Caco-2 (cell line): ENCODE measurements at regions of chr14 and their contacts with region 1.

Region 1: DNA sequence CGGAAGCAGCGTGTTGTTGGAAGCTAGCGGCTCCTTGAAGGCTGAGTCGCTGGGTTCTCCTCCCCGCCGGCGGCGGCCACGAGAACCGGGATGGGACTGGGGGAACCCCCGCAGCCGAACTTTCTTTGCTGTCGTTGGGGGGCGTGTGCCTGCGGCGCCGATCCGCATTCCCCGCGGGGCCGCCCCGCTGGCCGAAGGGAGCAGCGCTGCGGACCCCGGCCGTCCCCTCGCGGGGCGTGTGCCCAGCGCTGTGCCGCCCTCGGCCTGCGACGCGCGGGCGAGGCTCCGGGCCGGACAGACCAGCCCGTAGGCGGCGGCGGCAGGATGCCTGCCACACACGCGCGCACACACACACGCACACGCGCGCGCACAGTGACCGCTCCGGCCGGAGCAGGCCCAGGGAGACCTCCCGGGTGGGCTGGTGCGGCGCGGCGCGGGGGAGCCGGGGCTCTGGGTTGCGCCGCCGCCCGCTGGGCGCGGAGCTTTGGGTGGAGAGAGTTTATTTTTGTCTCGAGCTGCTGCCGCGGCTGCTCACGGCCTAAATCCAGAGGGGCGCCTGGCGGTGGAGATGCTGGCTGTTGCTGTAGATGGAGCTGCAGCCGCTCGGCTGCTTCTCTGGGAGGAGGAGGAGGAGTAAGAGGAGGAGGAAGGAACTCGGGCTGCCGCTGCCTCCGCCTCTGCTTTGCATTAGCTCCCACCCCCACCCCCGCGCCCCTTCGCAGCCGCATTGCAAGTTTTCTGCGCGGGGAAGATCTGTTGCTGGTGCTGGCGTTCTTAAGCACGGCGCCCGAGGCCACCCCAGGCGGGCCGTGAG is at the start of gene SAMD4A:
- DNase-seq: peak; percentile 72 to 83
- H3K4me3 ChIP-seq: peak within 1 kb of the TSS; percentile 73
- H3K4me3 Mint-ChIP-seq: peak within 1 kb of the TSS; percentile 95
- H3K27ac Mint-ChIP-seq: peak within 1 kb of the TSS; percentile 98
- H3K4me1 ChIP-seq: peaks cover 24% of the 10 kb centered on the region
- H3K4me1 Mint-ChIP-seq: peaks cover 8% of the 10 kb centered on the region
- H3K27me3 ChIP-seq: no peaks in the 10 kb centered on the region
- H3K27me3 Mint-ChIP-seq: no peaks in the 10 kb centered on the region
- CTCF ChIP-seq: peak in 1 of 2 experiments; percentile 14
- total RNA-seq, gene SAMD4A: 60.4 and 60.8 TPM in 2 replicates

Region 2: DNA sequence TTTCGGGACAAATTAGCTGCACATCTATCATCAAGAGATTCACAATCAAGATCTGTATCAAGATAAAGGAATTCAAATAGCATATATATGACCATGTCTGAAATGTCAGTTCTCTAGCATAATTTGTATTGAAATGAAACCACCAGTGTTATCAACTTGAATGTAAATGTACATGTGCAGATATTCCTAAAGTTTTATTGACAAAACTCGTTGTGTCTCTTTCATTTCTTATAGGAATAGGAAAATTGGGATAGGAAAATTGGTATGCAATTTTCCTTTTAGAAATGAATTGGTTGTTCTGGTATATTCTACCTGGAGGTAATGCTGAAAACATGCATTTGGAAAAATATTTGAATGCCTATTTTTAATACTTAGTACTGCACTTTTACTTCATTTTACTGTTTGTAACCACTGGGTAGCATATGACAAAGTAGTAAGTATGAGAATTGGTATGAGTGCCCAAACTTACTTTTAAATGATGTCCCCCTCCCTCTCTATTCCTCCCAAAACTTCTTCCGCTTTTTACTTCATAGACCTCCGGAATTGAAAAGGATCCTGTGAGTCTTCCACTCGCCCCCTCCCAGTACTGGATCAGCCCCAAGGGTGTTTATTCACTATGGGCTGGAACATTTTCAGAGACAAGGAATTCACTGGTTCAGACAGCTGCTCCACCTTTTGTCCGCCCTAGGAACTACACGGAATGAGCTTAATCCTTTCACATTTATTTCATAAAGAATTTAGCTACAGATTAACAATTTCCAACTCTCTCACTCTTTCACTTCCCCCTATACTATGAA is 146.4 kb before region 1 on chr14:
- CTCF ChIA-PET with region 1: no interaction called
- POLR2A ChIA-PET with region 1: no interaction called
- intact Hi-C with region 1: no loop called
- DNase-seq: peak; percentile 59 to 66
- H3K4me3 ChIP-seq: no peak overlapping the region
- H3K4me3 Mint-ChIP-seq: no peak overlapping the region
- H3K27ac Mint-ChIP-seq: no peak overlapping the region
- H3K4me1 ChIP-seq: no peaks in the 10 kb centered on the region
- H3K4me1 Mint-ChIP-seq: peaks cover 9% of the 10 kb centered on the region
- H3K27me3 ChIP-seq: no peaks in the 10 kb centered on the region
- H3K27me3 Mint-ChIP-seq: no peaks in the 10 kb centered on the region
- CTCF ChIP-seq: peak; percentile 48 to 67

Region 3: GRCh38 chr14:54532111-54533012 is 34.3 kb before region 1 on chr14:
- CTCF ChIA-PET with region 1: no interaction called
- POLR2A ChIA-PET with region 1: no interaction called
- intact Hi-C with region 1: no loop called
- DNase-seq: no peak
- H3K4me3 ChIP-seq: no peak overlapping the region
- H3K4me3 Mint-ChIP-seq: no peak overlapping the region
- H3K27ac Mint-ChIP-seq: no peak overlapping the region
- H3K4me1 ChIP-seq: peaks cover under 1% of the 10 kb centered on the region; the same call in 1 of the 2 replicates
- H3K4me1 Mint-ChIP-seq: no peaks in the 10 kb centered on the region
- H3K27me3 ChIP-seq: no peaks in the 10 kb centered on the region
- H3K27me3 Mint-ChIP-seq: no peaks in the 10 kb centered on the region
- CTCF ChIP-seq: no peak

Region 4: GRCh38 chr14:54642801-54643697 is 76.4 kb after region 1 on chr14:
- CTCF ChIA-PET with region 1: interaction called, 61 read pairs
- POLR2A ChIA-PET with region 1: interaction called, 17 read pairs
- intact Hi-C with region 1: loop called (anchors 1 kb)
- DNase-seq: peak; percentile 79
- H3K4me3 ChIP-seq: no peak overlapping the region
- H3K4me3 Mint-ChIP-seq: peak overlapping the region; percentile 75
- H3K27ac Mint-ChIP-seq: peak overlapping the region; percentile 87
- H3K4me1 ChIP-seq: peaks cover 79% of the 10 kb centered on the region
- H3K4me1 Mint-ChIP-seq: peaks cover 31% of the 10 kb centered on the region
- H3K27me3 ChIP-seq: no peaks in the 10 kb centered on the region
- H3K27me3 Mint-ChIP-seq: no peaks in the 10 kb centered on the region
- CTCF ChIP-seq: peak in 1 of 2 experiments; percentile 23

Region 5: DNA sequence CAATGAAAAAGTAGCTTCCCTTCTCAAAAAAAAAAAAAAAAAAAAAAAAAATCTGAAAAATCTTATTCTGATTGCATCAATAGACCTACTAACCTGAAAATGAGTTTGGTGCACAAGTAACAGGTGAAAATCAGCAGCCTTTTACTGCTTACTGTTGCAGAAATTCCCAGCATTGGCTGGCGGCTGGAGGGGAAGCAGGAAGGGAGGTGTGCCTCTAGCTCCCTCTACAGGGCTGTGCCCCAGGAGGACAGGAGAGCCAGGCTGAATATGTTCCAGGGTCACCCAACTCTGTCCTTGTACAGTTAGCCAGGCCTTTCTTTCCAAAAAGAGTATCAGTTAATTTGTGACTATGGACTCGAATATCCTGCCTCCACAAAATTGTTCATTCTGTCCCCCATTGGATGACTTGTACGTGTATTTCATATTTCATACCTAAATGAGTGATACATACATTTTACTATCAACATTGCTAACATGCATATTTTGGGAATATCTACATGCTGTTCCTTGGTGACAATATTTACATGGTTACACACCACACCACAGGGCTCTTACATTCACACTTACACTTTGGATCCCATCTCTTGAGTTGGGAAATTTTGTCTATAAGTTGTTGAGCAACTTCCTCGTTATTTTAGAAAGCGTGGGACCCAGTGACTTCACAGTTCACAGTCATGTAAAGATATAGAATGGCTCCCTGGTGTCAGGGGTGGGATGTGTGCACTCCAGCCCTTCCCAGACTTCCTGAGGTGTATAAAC is 125.1 kb after region 1 on chr14:
- CTCF ChIA-PET with region 1: interaction called, 8 read pairs
- POLR2A ChIA-PET with region 1: no interaction called
- intact Hi-C with region 1: loop called (anchors 1 kb)
- DNase-seq: peak; percentile 71 to 82
- H3K4me3 ChIP-seq: no peak overlapping the region
- H3K4me3 Mint-ChIP-seq: no peak overlapping the region
- H3K27ac Mint-ChIP-seq: peak overlapping the region; percentile 58
- H3K4me1 ChIP-seq: no peaks in the 10 kb centered on the region
- H3K4me1 Mint-ChIP-seq: peaks cover 33% of the 10 kb centered on the region
- H3K27me3 ChIP-seq: no peaks in the 10 kb centered on the region
- H3K27me3 Mint-ChIP-seq: no peaks in the 10 kb centered on the region
- CTCF ChIP-seq: peak; percentile 77 to 93

Region 6: DNA sequence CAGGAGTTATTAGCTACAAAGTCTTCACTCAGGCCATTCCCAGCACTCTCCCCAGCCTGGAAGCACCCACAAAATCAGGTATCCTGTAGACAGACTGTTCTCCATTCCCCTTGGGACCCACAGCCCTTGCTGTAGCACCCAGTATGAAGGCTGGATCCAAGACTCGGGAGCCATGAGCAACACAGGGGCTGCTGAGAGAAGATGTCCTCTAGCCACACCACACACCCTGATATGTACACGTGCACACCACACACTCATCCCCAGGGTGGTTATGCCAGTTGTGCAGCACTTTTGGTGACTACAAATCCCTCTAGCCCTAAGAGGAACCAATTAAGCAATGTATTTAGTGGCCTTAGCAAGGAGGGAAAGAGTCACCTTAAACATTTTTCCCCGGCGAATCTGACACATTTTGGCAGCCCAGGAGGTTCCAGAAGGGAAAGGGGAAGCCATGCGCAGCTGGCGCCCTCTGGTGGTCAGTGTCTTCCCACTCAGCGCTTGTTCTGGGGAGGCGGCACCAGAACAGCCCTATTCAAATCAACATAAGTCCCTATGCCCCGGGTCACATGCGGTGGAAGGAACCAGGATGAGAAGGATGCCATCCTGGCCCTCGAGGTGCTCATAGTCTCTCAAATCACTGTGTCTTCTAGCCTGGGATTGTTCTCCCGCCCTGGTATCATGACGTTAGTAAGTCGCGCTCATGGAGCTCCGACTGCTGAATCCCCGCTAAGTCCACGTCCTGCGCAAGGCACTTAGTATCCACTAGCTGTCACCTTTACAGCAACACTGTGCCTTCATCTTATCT is 239.1 kb after region 1 on chr14:
- CTCF ChIA-PET with region 1: interaction called, 8 read pairs
- POLR2A ChIA-PET with region 1: no interaction called
- intact Hi-C with region 1: loop called (anchors 1 kb)
- DNase-seq: peak; percentile 75 to 85
- H3K4me3 ChIP-seq: no peak overlapping the region
- H3K4me3 Mint-ChIP-seq: no peak overlapping the region
- H3K27ac Mint-ChIP-seq: no peak overlapping the region
- H3K4me1 ChIP-seq: 0 out of 2 replicates have a peak, but pooled peaks cover 3% of the 10 kb centered on the region
- H3K4me1 Mint-ChIP-seq: no peaks in the 10 kb centered on the region
- H3K27me3 ChIP-seq: peaks cover 1% of the 10 kb centered on the region; the same call in 1 of the 2 replicates
- H3K27me3 Mint-ChIP-seq: no peaks in the 10 kb centered on the region
- CTCF ChIP-seq: peak; percentile 87 to 96